Dorsolateral prefrontal cortex (tissue), 120 donors: ENCODE measurements at regions of chr17 and their contacts with region 1.

Region 1: DNA sequence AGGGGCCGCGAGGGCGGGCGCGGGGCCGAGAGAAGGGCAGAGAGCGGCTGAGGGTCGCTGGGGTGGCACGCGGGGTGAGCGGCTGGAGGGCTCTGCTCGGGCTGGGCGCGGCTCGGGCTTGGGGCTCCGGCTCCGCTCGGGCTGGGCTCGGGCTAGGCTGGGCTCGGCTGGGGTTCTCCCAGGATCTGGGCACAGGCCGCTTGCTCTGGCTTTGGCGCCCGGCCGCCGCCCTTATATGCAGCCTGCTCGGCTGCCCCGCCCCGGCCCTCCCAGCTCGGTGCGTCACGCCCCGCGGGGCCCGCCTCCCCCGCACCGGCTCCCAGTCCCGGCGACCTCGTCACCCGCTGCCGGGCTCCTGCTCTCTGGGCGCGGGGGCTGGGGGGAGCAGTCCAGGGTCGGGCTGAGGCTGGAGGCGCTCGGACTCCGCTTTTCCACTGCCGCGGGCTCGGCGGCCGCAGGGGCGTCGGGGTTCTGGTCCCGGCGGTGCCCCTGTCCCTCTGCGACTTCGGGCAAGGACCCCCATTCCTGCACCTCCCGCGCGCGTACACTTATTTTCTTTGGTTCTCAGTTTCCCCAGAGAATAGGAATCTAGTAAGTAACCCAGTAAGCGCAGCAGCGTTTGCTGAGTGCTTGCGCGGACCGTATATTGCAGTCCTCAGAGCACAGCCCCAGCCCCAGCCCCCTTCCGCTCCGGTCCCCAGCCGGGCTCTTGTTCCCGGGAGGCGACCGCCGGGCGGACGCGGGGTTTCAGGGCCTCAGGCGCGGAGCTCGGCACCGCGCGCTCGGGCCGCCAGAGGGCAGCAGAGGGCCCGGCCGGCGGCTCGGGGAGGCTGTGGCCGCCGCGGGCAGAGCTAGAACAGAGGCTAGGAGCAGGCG is at the start of gene RASD1:
- DNase-seq: peak; percentile 83 to 97 (median 93)
- H3K4me3 ChIP-seq: peak within 1 kb of the TSS; percentile 55 to 88 (median 74)
- H3K27ac ChIP-seq: peak within 1 kb of the TSS in 57 of 59 donors; percentile 50 to 97 (median 89)
- H3K27me3 ChIP-seq: no peaks in the 10 kb centered on the region
- CTCF ChIP-seq: peak; percentile 74 to 100 (median 94)
- total RNA-seq, gene RASD1: 40.4 to 251 (median 136) TPM

Region 2: GRCh38 chr17:17376362-17376761 is 120.1 kb before region 1 on chr17:
- intact Hi-C with region 1: loop called in 1 of 2 experiments (anchors 5 kb)
- DNase-seq: peak in 1 of 10 donors; percentile 11
- H3K4me3 ChIP-seq: no peak overlapping the region
- H3K27ac ChIP-seq: peak overlapping the region in 5 of 59 donors; percentile 5 to 73 (median 19)
- H3K27me3 ChIP-seq: peaks cover 0 to 2% (median 0%) of the 10 kb centered on the region in 45 donors
- CTCF ChIP-seq: no peak

Region 3: DNA sequence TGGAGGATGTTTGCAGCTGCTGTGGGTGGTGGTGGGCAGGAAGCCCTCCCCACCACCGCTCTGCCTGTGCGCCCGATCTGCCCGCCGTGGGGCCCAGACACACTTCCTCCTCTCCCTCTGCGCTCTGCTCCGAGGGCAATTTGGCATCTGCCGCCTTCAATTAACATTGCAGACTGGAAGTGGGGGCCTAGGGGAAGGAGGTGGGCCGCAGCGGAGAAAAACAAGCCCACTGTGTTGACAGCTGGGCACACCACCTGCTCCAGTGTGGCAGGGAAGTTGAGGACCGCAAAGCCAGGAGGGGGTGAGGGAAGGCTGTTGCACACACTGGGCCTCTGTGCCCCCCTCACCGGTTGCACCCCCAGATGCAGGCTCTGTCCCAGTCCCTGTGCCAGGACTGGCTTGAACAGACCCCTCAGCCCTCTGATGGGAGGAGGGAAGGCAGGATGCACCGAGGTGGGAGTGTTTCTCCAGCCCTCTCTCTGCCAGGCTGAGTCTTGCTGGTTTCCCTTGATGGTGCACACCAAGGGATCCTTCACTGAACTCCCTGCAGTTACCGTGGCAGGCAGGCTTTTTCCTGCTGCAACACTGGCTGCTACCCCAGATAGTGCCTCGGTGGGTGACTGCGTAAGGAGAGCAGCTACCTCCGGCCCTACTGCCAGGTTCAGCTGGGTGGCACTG is 92.4 kb before region 1 on chr17:
- intact Hi-C with region 1: no loop called
- DNase-seq: no peak
- H3K4me3 ChIP-seq: no peak overlapping the region
- H3K27ac ChIP-seq: peak overlapping the region in 4 of 59 donors; percentile 4 to 22 (median 16)
- H3K27me3 ChIP-seq: peaks cover 0 to 23% (median 0%) of the 10 kb centered on the region in 45 donors
- CTCF ChIP-seq: no peak

Region 4: GRCh38 chr17:17476865-17477467 is 19.5 kb before region 1 on chr17 and contains the start of gene MED9:
- intact Hi-C with region 1: loop called in 1 of 2 experiments (anchors 1 kb)
- DNase-seq: peak; percentile 83 to 94 (median 90)
- H3K4me3 ChIP-seq: peak within 1 kb of the TSS; percentile 70 to 100 (median 96)
- H3K27ac ChIP-seq: peak within 1 kb of the TSS; percentile 39 to 96 (median 88)
- H3K27me3 ChIP-seq: no peaks in the 10 kb centered on the region
- CTCF ChIP-seq: peak in 21 of 56 donors; percentile 6 to 50 (median 21)
- total RNA-seq, gene MED9: 19.4 to 47.3 (median 33.7) TPM

Region 5: GRCh38 chr17:17591355-17592298 is 95.2 kb after region 1 on chr17 and contains the start of gene PEMT:
- intact Hi-C with region 1: loop called (anchors 2 to 5 kb)
- DNase-seq: peak; percentile 95 to 99 (median 98)
- H3K4me3 ChIP-seq: peak within 1 kb of the TSS; percentile 70 to 100 (median 95)
- H3K27ac ChIP-seq: peak within 1 kb of the TSS in 58 of 59 donors; percentile 55 to 95 (median 88)
- H3K27me3 ChIP-seq: no peaks in the 10 kb centered on the region
- CTCF ChIP-seq: peak in 31 of 56 donors; percentile 4 to 61 (median 37)
- total RNA-seq, gene PEMT: 11.4 to 41.9 (median 24.7) TPM